ENCODE measurements at regions of chr9 and their contacts with region 1.

Region 1: DNA sequence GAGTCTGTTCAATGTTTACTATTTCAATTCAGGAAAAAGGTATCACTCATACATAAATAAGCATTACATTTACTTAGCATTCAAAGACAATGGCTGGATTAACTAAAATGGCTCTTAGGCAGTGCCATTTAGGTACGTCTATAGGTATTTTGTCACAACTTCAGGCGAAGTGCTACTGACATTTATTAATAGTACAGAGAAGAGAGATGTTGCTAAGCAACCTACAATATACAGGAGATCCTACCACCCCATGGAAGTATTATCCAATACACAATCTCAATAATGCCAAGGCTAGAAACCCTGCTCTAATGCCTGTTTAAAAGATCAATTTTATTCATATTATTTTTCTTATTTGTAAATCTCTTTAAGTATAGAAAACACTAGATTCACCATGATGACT is 76.0 kb downstream of the UBAP2 start:
- DNase-seq: no peak
- H3K4me3 ChIP-seq: no peak overlapping the region
- H3K27ac ChIP-seq: no peak overlapping the region
- H3K4me1 ChIP-seq: no peaks in the 10 kb centered on the region
- H3K27me3 ChIP-seq: no peaks in the 10 kb centered on the region
- CTCF ChIP-seq: no peak

Region 2: DNA sequence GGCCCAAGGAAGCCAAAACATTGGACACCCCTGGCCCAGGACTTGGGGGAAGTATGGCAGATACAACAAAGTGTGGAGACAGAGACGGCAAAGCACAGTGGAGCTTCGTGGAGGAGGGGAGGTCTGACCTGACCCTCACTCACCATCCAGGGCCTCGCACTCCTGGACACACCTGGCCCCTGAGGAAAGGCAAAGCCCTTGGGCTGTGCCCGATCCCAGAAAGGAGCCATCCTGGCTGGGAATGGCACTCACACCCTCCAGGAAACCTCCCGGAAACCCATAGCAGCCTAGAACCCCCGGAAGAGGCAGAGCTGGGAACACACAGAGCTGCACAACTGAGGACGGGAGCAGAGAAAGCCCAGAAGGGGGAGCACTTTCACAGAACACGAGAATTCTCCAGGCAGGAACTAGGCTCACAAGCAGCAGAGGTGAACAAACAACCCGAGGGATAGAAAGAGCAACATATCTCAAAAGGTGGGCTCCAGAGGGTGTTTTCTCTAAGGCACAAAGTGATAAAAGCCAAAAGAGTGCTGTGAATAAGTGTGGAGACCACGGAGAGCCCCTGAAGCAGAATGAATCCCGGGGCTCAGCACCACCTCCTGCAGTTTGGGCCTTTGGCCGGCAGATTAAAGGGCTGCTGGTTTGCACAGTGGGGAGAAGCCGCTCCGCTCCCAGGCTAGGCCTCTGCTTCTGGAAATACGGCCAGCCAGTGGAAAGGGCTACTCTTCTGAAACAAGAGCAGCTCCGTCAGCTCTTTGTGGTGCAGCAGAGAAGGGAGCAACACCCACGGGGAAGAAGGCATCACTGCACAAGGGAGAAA is 47.5 kb before region 1 on chr9:
- CTCF ChIA-PET with region 1: interaction called, 7 read pairs
- dilution Hi-C with region 1: loop called (anchors 5 kb)
- in situ Hi-C with region 1: no loop called
- intact Hi-C with region 1: no loop called
- DNase-seq: no peak
- H3K4me3 ChIP-seq: no peak overlapping the region
- H3K27ac ChIP-seq: no peak overlapping the region
- H3K4me1 ChIP-seq: no peaks in the 10 kb centered on the region
- H3K27me3 ChIP-seq: no peaks in the 10 kb centered on the region
- CTCF ChIP-seq: peak; percentile 32 to 52

Region 3: GRCh38 chr9:34025062-34025461 is 52.4 kb after region 1 on chr9:
- CTCF ChIA-PET with region 1: no interaction called
- dilution Hi-C with region 1: loop called (anchors 5 kb)
- in situ Hi-C with region 1: no loop called
- intact Hi-C with region 1: no loop called
- DNase-seq: no peak
- H3K4me3 ChIP-seq: no peak overlapping the region
- H3K27ac ChIP-seq: no peak overlapping the region
- H3K4me1 ChIP-seq: no peaks in the 10 kb centered on the region
- H3K27me3 ChIP-seq: no peaks in the 10 kb centered on the region
- CTCF ChIP-seq: no peak